CD8-positive, alpha-beta memory T cell (primary cell): ENCODE measurements at regions of chr17 and their contacts with region 1.

Region 1: GRCh38 chr17:78790552-78790951 is 8.5 kb upstream of the CYTH1 start:
- DNase-seq: no peak
- H3K4me3 ChIP-seq: no peak overlapping the region
- H3K4me3 Mint-ChIP-seq: peak overlapping the region in 2 of 7 donors; percentile 6 to 12
- H3K27ac ChIP-seq: no peak overlapping the region
- H3K27ac Mint-ChIP-seq: peak overlapping the region in 7 of 8 donors; percentile 50 to 88 (median 68)
- H3K4me1 ChIP-seq: peaks cover 63% of the 10 kb centered on the region
- H3K4me1 Mint-ChIP-seq: peaks cover 53 to 69% (median 66%) of the 10 kb centered on the region in 3 donors
- H3K27me3 ChIP-seq: no peaks in the 10 kb centered on the region
- H3K27me3 Mint-ChIP-seq: peaks cover 0 to 3% of the 10 kb centered on the region in 2 donors

Region 2: DNA sequence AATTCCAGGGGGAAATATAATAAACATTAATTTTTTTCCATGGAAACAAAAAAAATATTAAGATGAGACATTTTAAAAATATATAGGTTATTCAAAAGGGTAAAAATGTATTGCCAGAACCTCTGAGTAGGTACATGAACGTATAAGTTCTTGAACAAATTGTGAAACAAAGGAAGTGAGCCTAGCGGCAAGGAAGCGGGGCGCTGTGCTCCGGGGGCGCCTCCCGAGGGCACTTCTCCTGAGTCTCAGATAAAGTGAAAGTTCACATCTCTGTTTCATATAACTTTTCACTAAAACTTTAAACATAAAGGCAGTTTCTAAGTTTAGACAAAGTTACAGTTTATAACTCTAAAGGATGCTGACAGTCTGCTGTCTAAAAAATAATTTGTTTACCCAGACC is 779.8 kb before region 1 on chr17:
- CTCF ChIA-PET with region 1: no interaction called
- POLR2A ChIA-PET with region 1: no interaction called
- DNase-seq: peak in 2 of 5 donors; percentile 28 to 51
- H3K4me3 ChIP-seq: no peak overlapping the region
- H3K4me3 Mint-ChIP-seq: peak overlapping the region in 3 of 7 donors; percentile 15 to 46 (median 36)
- H3K27ac ChIP-seq: no peak overlapping the region
- H3K27ac Mint-ChIP-seq: peak overlapping the region; percentile 31 to 66 (median 46)
- H3K4me1 ChIP-seq: peaks cover 6% of the 10 kb centered on the region
- H3K4me1 Mint-ChIP-seq: peaks cover 25 to 42% (median 30%) of the 10 kb centered on the region in 3 donors
- H3K27me3 ChIP-seq: no peaks in the 10 kb centered on the region
- H3K27me3 Mint-ChIP-seq: no peaks in the 10 kb centered on the region

Region 3: DNA sequence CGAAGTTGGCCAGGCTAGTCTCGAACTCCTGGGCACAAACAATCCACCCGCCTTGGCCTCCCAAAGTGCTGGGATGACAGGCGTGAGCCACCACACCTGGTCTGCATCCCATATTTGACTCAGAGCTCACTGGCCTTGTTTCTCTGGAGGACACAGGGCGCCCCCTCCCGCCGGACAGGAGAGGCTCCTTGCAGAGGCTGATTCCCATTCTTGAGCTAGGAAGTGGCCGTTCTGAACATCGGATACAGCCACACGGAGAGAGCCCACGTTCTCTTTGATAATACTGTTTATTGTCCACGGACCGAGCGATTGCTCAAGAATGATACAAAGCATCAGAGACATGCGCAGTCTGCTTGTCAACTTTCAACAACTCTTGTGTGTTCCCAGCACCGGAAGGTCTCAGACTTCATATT is 62.2 kb after region 1 on chr17:
- CTCF ChIA-PET with region 1: no interaction called
- POLR2A ChIA-PET with region 1: interaction called, 11 read pairs
- DNase-seq: no peak
- H3K4me3 ChIP-seq: no peak overlapping the region
- H3K4me3 Mint-ChIP-seq: no peak overlapping the region
- H3K27ac ChIP-seq: no peak overlapping the region
- H3K27ac Mint-ChIP-seq: no peak overlapping the region
- H3K4me1 ChIP-seq: no peaks in the 10 kb centered on the region
- H3K4me1 Mint-ChIP-seq: no peaks in the 10 kb centered on the region
- H3K27me3 ChIP-seq: no peaks in the 10 kb centered on the region
- H3K27me3 Mint-ChIP-seq: peaks cover 0 to 7% of the 10 kb centered on the region in 2 donors

Region 4: GRCh38 chr17:78925234-78925633 is 134.7 kb after region 1 on chr17 and contains the start of gene TIMP2:
- CTCF ChIA-PET with region 1: no interaction called
- POLR2A ChIA-PET with region 1: no interaction called
- DNase-seq: peak; percentile 28 to 70 (median 54)
- H3K4me3 ChIP-seq: peak within 1 kb of the TSS; percentile 50
- H3K4me3 Mint-ChIP-seq: peak within 1 kb of the TSS; percentile 10 to 91 (median 75)
- H3K27ac ChIP-seq: no peak within 1 kb of the TSS
- H3K27ac Mint-ChIP-seq: no peak within 1 kb of the TSS
- H3K4me1 ChIP-seq: peaks cover 9% of the 10 kb centered on the region
- H3K4me1 Mint-ChIP-seq: peaks cover 5 to 11% (median 6%) of the 10 kb centered on the region in 3 donors
- H3K27me3 ChIP-seq: peaks cover 7% of the 10 kb centered on the region
- H3K27me3 Mint-ChIP-seq: peaks cover 23 to 27% of the 10 kb centered on the region in 2 donors
- total RNA-seq, gene TIMP2: 1.3 to 1.6 TPM